ENCODE measurements at regions of chr2 and their contacts with region 1.

Region 1: GRCh38 chr2:246489-247144 is 17.2 kb downstream of the SH3YL1 start:
- DNase-seq: peak; percentile 77 to 88 (median 82)
- H3K4me3 ChIP-seq: no peak overlapping the region
- H3K27ac ChIP-seq: no peak overlapping the region
- H3K4me1 ChIP-seq: no peaks in the 10 kb centered on the region
- H3K27me3 ChIP-seq: no peaks in the 10 kb centered on the region

Region 2: DNA sequence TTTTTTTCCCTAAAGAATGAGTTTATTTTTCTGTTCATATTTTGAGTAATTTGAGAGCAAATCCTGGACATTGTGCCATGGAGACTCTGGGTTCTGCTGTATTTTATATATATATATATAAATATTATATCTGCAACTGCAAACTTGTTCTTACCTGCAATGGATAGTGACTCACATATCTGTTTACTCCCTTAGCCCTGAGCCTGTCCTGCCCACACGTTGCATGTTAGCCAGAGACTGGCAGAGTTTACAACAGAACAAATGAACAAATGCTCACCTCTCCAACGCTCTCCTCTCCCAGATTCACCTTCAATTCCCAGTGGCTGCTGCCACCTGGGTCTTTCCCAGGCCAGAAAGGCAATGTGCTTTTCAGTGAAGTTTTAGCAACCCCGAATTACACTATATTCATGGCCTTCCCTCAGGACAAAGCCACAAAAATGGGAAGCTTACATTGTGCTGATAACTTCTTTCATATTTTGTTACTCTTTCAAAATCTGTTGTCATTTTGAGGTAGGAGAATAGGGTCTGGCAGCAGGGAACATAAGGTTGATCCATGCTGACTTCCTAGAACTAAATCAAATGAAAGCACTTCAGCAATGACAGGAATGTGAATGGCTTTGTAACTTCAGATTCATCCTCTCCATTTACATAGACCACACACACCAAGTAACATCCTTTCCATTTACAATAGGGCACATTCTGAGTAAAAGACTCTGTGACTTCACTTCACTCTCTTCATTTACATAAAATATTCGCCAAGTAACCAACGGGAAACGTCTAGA is 94.9 kb before region 1 on chr2:
- CTCF ChIA-PET with region 1: no interaction called
- POLR2A ChIA-PET with region 1: no interaction called
- DNase-seq: no peak
- H3K4me3 ChIP-seq: no peak overlapping the region
- H3K27ac ChIP-seq: no peak overlapping the region
- H3K4me1 ChIP-seq: no peaks in the 10 kb centered on the region
- H3K27me3 ChIP-seq: peaks cover 0 to 7% (median 0%) of the 10 kb centered on the region in 5 experiments

Region 3: GRCh38 chr2:260507-261161 is 14.0 kb after region 1 on chr2:
- CTCF ChIA-PET with region 1: interaction called, 23 read pairs
- POLR2A ChIA-PET with region 1: no interaction called
- DNase-seq: no peak
- H3K4me3 ChIP-seq: no peak overlapping the region
- H3K27ac ChIP-seq: no peak overlapping the region
- H3K4me1 ChIP-seq: peaks cover 2 to 19% (median 12%) of the 10 kb centered on the region in 4 experiments
- H3K27me3 ChIP-seq: no peaks in the 10 kb centered on the region

Region 4: GRCh38 chr2:290090-290722 is 43.6 kb after region 1 on chr2:
- CTCF ChIA-PET with region 1: interaction called, 21 read pairs
- POLR2A ChIA-PET with region 1: no interaction called
- DNase-seq: peak; percentile 71 to 77 (median 75)
- H3K4me3 ChIP-seq: peak overlapping the region; percentile 3 to 83 (median 61)
- H3K27ac ChIP-seq: no peak overlapping the region
- H3K4me1 ChIP-seq: peaks cover 0 to 29% (median 23%) of the 10 kb centered on the region in 4 experiments
- H3K27me3 ChIP-seq: peaks cover 17 to 52% (median 29%) of the 10 kb centered on the region in 5 experiments

Region 5: DNA sequence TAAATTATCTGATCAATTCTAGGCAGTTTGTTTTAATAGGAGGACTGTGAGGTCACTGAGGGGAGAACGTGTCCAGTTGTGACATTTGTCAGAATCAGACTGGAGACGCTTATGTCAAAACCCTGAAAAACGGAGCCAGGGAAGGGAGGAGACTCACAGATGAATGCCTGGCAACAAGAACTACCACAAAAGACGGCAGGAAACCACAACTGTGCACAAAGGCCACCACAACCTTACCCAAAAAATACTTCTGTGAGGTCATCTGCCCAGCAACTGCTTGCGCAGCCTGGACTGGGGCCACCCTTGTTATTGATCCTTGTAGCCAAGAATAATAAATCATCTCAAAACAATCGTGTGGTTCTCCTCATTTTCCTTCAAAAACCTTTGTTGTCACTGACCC is 214.2 kb after region 1 on chr2:
- CTCF ChIA-PET with region 1: no interaction called
- POLR2A ChIA-PET with region 1: no interaction called
- DNase-seq: peak; percentile 91 to 96 (median 96)
- H3K4me3 ChIP-seq: peak overlapping the region in 5 of 7 experiments; percentile 0 to 54 (median 33)
- H3K27ac ChIP-seq: peak overlapping the region in 1 of 2 experiments; percentile 27
- H3K4me1 ChIP-seq: peaks cover 18 to 35% (median 23%) of the 10 kb centered on the region in 4 experiments
- H3K27me3 ChIP-seq: no peaks in the 10 kb centered on the region